Naive thymus-derived CD4-positive, alpha-beta T cell (primary cell): ENCODE measurements at regions of chr9 and their contacts with region 1.

Region 1: DNA sequence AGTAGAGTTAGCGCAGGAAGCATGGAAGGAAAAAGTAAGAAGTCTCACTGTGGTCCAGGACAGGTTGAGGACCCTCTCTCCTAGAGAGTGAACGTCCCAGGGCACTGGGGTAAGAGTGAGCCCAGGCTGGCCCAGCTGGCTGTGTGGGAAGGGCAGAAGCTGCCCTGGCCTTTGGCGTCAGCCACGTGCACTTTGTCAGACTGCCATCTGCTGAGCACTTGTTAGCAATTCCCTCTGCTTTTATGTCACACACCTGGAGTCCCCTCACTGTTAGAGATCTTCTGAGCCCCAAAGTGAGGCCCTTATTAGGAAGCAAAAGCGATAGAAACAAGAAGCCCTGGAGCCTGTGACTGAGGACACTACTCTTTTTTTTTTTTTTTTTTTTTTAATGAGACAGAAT is 79.1 kb downstream of the UGCG start:
- DNase-seq: peak in 2 of 9 donors; percentile 9 to 14
- ATAC-seq: peak; percentile 47
- H3K4me3 ChIP-seq: no peak overlapping the region
- H3K4me3 Mint-ChIP-seq: no peak overlapping the region
- H3K27ac ChIP-seq: no peak overlapping the region
- H3K27ac Mint-ChIP-seq: no peak overlapping the region
- H3K4me1 ChIP-seq: no peaks in the 10 kb centered on the region
- H3K4me1 Mint-ChIP-seq: peaks cover 2 to 20% (median 10%) of the 10 kb centered on the region in 7 donors
- H3K27me3 ChIP-seq: no peaks in the 10 kb centered on the region
- H3K27me3 Mint-ChIP-seq: peaks cover 0 to 13% (median 0%) of the 10 kb centered on the region in 5 donors

Region 2: DNA sequence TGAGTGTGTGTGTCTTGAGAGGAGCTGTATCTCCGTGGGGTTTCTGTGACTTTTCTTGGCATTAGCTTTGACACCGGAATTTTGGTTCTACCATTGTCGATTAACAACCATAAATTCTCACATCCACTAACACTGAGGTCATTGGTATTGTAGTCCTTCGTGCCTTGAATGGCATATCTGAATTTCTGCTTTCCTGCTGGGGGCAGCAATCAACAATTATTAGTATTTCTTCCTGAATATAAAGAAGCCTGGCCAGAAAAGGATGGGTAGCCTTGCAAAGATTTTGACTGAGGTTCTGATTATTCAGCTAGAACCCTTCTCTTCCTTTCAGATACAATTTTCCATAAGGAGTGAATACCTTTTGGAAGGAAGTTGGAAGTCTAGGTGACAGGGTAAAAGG is 147.5 kb before region 1 on chr9:
- CTCF ChIA-PET with region 1: no interaction called
- POLR2A ChIA-PET with region 1: interaction called, 3 read pairs
- intact Hi-C with region 1: loop called in 1 of 2 experiments (anchors 1 kb)
- DNase-seq: peak in 2 of 9 donors; percentile 3 to 6
- ATAC-seq: no peak
- H3K4me3 ChIP-seq: no peak overlapping the region
- H3K4me3 Mint-ChIP-seq: no peak overlapping the region
- H3K27ac ChIP-seq: no peak overlapping the region
- H3K27ac Mint-ChIP-seq: no peak overlapping the region
- H3K4me1 ChIP-seq: no peaks in the 10 kb centered on the region
- H3K4me1 Mint-ChIP-seq: peaks cover 0 to 2% (median 0%) of the 10 kb centered on the region in 7 donors
- H3K27me3 ChIP-seq: no peaks in the 10 kb centered on the region
- H3K27me3 Mint-ChIP-seq: peaks cover 0 to 8% (median 0%) of the 10 kb centered on the region in 5 donors

Region 3: GRCh38 chr9:111926421-111926875 is 49.3 kb before region 1 on chr9:
- CTCF ChIA-PET with region 1: no interaction called
- POLR2A ChIA-PET with region 1: no interaction called
- intact Hi-C with region 1: no loop called
- DNase-seq: peak in 7 of 9 donors; percentile 75 to 86 (median 82)
- ATAC-seq: peak; percentile 98
- H3K4me3 ChIP-seq: no peak overlapping the region
- H3K4me3 Mint-ChIP-seq: peak overlapping the region; percentile 61 to 79 (median 72)
- H3K27ac ChIP-seq: peak overlapping the region; percentile 23
- H3K27ac Mint-ChIP-seq: peak overlapping the region; percentile 79 to 94 (median 91)
- H3K4me1 ChIP-seq: peaks cover 29 to 35% of the 10 kb centered on the region in 2 donors
- H3K4me1 Mint-ChIP-seq: peaks cover 21 to 67% (median 50%) of the 10 kb centered on the region in 7 donors
- H3K27me3 ChIP-seq: no peaks in the 10 kb centered on the region
- H3K27me3 Mint-ChIP-seq: no peaks in the 10 kb centered on the region